ENCODE measurements at regions of chrX and their contacts with region 1.

Region 1: DNA sequence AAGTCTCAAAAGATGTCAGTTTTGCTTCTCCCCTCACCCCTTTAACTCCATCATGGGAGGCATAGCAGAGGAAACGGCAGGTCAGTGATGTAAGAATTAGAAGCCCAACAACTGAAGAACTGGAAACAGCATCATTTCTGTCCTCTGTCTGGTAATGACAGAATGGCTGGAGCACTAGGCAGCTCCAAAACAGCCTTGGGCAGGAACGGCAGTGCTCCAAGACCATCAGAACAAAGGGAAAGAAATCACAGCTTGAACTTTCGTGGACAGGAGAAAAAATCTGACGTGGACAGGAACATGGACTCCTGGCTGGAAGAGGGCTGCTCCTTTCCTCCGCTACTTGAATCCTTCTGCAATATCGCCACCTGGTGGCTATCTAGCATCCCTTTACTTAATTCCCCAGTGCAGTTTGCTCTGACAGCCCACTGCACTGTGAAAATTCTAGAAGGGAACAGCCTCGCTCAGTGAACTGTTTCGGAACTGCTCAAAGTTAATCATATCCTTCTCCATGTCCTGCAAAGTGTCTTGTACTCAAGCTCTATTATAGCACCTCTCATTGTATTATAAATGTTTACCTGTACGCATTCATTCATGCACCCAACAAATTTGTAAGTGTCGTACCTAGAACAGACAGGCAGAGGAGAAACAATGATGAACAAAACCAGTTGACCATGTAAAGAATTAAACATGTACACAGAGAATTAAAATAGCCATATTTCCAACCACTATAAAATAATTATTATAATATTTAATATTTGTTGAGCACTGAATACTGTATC is 20.4 kb downstream of the SLC25A53 start:
- DNase-seq: peak; percentile 72
- H3K4me3 ChIP-seq: no peak overlapping the region
- H3K27ac ChIP-seq: no peak overlapping the region
- H3K4me1 ChIP-seq: no peaks in the 10 kb centered on the region
- CTCF ChIP-seq: peak; percentile 76

Region 2: GRCh38 chrX:103845165-103845653 is 291.2 kb before region 1 on chrX:
- CTCF ChIA-PET with region 1: no interaction called
- POLR2A ChIA-PET with region 1: no interaction called
- intact Hi-C with region 1: loop called (anchors 1 kb)
- DNase-seq: peak; percentile 59
- H3K4me3 ChIP-seq: no peak overlapping the region
- H3K27ac ChIP-seq: no peak overlapping the region
- H3K4me1 ChIP-seq: no peaks in the 10 kb centered on the region
- CTCF ChIP-seq: peak; percentile 80

Region 3: DNA sequence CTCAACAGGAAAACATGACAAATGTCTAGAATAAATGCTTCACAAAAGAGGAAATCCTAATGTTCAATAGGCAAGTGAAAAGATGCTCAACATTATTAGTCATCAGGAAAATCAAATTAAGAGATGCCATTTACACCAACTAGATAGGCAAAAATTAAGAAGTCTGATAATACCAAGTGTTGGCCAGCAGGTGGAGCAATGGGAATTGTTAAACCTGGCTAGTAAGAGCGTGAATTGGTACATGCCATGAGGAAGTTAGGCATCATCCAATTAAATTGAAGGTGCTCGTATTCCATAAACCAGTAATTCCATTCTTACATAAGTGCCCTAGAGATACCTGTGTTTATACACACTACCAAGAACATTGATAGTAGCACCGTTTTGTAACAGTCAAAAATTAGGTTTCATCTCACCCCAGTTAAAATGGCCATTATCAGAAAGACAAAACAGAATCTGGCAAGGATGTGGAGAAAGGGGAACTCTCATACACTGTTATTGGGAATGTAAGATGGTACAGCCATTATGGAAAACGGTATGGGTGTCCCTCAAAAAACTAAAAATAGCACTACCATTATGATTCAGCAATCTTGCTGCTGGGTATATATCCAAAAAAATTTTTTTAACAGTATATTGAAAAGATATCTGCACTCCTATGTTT is 38.1 kb before region 1 on chrX:
- CTCF ChIA-PET with region 1: no interaction called
- POLR2A ChIA-PET with region 1: no interaction called
- intact Hi-C with region 1: loop called (anchors 1 kb)
- DNase-seq: peak; percentile 67
- H3K4me3 ChIP-seq: no peak overlapping the region
- H3K27ac ChIP-seq: no peak overlapping the region
- H3K4me1 ChIP-seq: no peaks in the 10 kb centered on the region
- CTCF ChIP-seq: peak; percentile 77

Region 4: DNA sequence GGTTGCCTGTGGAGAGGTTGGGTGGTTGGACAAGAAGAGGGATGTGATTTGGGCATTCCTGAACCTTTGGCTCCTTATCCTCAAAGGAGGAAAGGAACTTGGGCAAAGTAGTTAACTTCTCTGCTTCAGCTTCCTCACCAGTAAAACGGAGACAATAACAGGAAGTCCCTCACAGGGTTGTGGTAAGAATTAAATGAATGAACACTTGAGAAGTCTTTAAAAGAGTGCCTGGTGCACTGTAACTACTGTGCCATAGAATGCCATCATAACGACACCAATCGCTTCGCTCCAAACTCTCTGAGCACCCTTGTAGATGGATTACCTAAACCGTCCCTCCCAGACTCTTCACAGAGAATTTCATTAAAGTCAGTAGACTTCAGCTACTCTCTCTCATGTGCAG is 13.6 kb before region 1 on chrX:
- CTCF ChIA-PET with region 1: no interaction called
- POLR2A ChIA-PET with region 1: no interaction called
- intact Hi-C with region 1: no loop called
- DNase-seq: peak; percentile 51
- H3K4me3 ChIP-seq: no peak overlapping the region
- H3K27ac ChIP-seq: peak overlapping the region; percentile 65
- H3K4me1 ChIP-seq: peaks cover 36% of the 10 kb centered on the region
- CTCF ChIP-seq: no peak